CD8-positive, alpha-beta T cell (primary cell): ENCODE measurements at regions of chr5 and their contacts with region 1.

Region 1: DNA sequence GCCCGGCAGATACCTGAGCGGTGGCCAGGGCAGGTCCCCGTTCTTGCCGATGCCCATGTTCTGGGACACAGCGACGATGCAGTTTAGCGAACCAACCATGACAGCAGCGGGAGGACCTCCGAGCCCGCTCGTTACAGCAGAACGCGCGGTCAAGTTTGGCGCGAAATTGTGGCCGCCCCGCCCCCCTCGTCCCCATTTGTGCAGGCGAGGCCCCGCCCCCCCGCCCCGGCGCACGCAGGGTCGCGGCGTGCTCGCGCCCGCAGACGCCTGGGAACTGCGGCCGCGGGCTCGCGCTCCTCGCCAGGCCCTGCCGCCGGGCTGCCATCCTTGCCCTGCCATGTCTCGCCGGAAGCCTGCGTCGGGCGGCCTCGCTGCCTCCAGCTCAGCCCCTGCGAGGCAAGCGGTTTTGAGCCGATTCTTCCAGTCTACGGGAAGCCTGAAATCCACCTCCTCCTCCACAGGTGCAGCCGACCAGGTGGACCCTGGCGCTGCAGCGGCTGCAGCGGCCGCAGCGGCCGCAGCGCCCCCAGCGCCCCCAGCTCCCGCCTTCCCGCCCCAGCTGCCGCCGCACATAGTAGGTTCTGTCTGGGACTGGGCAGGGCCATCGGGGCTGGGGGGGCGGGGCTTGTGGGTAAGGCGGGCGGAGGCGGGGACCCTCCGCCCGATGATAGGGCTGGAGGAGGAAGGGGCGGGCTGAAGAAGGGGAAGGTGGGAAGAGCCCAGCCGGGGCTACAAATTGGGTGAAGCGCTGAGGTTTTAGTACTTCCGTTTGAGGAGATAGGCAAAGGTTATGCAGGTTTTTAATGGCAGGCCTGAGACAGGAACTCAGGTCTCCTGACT is at the starts of genes DHFR and MSH3:
- DNase-seq: peak; percentile 78 to 96 (median 90)
- ATAC-seq: peak; percentile 76
- H3K4me3 ChIP-seq: peak within 1 kb of the TSS; percentile 66 to 83
- H3K4me3 Mint-ChIP-seq: peak within 1 kb of the TSS; percentile 87
- H3K27ac ChIP-seq: peak within 1 kb of the TSS; percentile 71 to 89
- H3K27ac Mint-ChIP-seq: peak within 1 kb of the TSS; percentile 96
- H3K4me1 ChIP-seq: peaks cover 27% of the 10 kb centered on the region
- H3K4me1 Mint-ChIP-seq: peaks cover 27% of the 10 kb centered on the region
- H3K27me3 ChIP-seq: no peaks in the 10 kb centered on the region
- H3K27me3 Mint-ChIP-seq: no peaks in the 10 kb centered on the region
- CTCF ChIP-seq: no peak
- total RNA-seq, gene DHFR: 5.9 TPM
- total RNA-seq, gene MSH3: 8.5 to 8.6 TPM

Region 2: GRCh38 chr5:79235634-79236363 is 1418.8 kb before region 1 on chr5 and contains the start of gene JMY:
- CTCF ChIA-PET with region 1: no interaction called
- POLR2A ChIA-PET with region 1: no interaction called
- intact Hi-C with region 1: loop called in 1 of 2 experiments (anchors 2 kb)
- DNase-seq: peak; percentile 72 to 94 (median 85)
- ATAC-seq: peak; percentile 86
- H3K4me3 ChIP-seq: peak within 1 kb of the TSS; percentile 79 to 81
- H3K4me3 Mint-ChIP-seq: peak within 1 kb of the TSS; percentile 97
- H3K27ac ChIP-seq: peak within 1 kb of the TSS; percentile 91 to 98
- H3K27ac Mint-ChIP-seq: peak within 1 kb of the TSS; percentile 96
- H3K4me1 ChIP-seq: peaks cover 28% of the 10 kb centered on the region
- H3K4me1 Mint-ChIP-seq: peaks cover 34% of the 10 kb centered on the region
- H3K27me3 ChIP-seq: no peaks in the 10 kb centered on the region
- H3K27me3 Mint-ChIP-seq: no peaks in the 10 kb centered on the region
- CTCF ChIP-seq: no peak
- total RNA-seq, gene JMY: 104 TPM

Region 3: DNA sequence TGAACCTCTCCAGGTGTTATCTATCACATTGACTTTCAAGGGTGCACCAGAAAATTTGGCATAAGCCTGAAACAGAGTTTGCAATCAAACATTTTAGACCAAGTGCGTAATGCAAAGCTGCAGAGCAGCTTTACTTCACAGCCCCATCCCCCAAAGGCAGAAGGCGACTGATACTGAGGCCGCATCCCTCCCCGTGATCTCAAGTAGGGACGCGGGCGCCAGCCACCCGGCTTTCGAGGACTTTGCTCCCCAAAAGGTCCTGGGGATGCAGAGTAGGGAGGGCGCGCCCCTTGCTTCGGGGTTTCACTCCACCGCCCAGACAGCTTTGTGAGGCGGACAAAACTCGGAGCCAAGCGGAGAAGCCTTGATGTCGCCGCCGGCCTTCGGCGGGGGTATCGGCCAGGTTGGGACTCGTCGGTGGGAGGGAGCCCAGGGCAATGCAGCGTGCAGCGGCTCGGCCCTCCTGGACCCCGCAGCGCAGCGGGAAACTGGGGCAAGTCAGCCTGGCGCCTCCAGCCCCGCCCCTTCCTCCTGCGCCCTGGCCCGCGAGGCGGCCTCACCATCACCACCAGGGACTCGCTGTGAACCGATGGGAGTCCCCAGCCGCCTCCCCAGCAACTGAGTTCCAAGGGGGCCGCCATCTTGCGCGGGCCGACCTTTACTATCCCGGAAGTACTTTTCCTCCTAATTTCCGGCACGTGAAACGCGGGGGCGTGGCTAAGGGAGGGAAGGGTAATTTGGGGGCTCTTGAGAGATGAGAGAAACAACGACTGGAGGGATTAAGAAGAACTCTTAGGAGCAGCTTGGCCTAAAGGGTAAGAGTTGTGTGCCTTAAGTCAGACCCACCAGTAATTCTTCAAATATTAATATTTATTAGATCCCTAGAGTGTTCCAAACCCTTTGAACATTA is 663.8 kb before region 1 on chr5 and contains the start of gene MTX3:
- CTCF ChIA-PET with region 1: no interaction called
- POLR2A ChIA-PET with region 1: interaction called, 5 read pairs
- intact Hi-C with region 1: loop called (anchors 2 kb)
- DNase-seq: peak; percentile 75 to 93 (median 89)
- ATAC-seq: peak; percentile 95
- H3K4me3 ChIP-seq: peak within 1 kb of the TSS; percentile 60 to 72
- H3K4me3 Mint-ChIP-seq: peak within 1 kb of the TSS; percentile 86
- H3K27ac ChIP-seq: peak within 1 kb of the TSS; percentile 51 to 70
- H3K27ac Mint-ChIP-seq: peak within 1 kb of the TSS; percentile 88
- H3K4me1 ChIP-seq: peaks cover 20% of the 10 kb centered on the region
- H3K4me1 Mint-ChIP-seq: peaks cover 32% of the 10 kb centered on the region
- H3K27me3 ChIP-seq: no peaks in the 10 kb centered on the region
- H3K27me3 Mint-ChIP-seq: peaks cover 11% of the 10 kb centered on the region
- CTCF ChIP-seq: no peak
- total RNA-seq, gene MTX3: 26.2 to 27.1 TPM

Region 4: GRCh38 chr5:80487829-80488721 is 166.5 kb before region 1 on chr5 and contains the start of gene FAM151B:
- CTCF ChIA-PET with region 1: no interaction called
- POLR2A ChIA-PET with region 1: no interaction called
- intact Hi-C with region 1: loop called (anchors 1 to 10 kb)
- DNase-seq: peak; percentile 5 to 80 (median 61)
- ATAC-seq: peak; percentile 83
- H3K4me3 ChIP-seq: peak within 1 kb of the TSS; percentile 46 to 68
- H3K4me3 Mint-ChIP-seq: peak within 1 kb of the TSS; percentile 81
- H3K27ac ChIP-seq: peak within 1 kb of the TSS in 1 of 2 experiments; percentile 10
- H3K27ac Mint-ChIP-seq: peak within 1 kb of the TSS; percentile 52
- H3K4me1 ChIP-seq: peaks cover 9% of the 10 kb centered on the region
- H3K4me1 Mint-ChIP-seq: peaks cover 12% of the 10 kb centered on the region
- H3K27me3 ChIP-seq: peaks cover 0 to 7% of the 10 kb centered on the region in 2 experiments
- H3K27me3 Mint-ChIP-seq: peaks cover 16% of the 10 kb centered on the region
- CTCF ChIP-seq: no peak
- total RNA-seq, gene FAM151B: 0.19 TPM in 1 of 2 experiments, not detected in the other

Region 5: DNA sequence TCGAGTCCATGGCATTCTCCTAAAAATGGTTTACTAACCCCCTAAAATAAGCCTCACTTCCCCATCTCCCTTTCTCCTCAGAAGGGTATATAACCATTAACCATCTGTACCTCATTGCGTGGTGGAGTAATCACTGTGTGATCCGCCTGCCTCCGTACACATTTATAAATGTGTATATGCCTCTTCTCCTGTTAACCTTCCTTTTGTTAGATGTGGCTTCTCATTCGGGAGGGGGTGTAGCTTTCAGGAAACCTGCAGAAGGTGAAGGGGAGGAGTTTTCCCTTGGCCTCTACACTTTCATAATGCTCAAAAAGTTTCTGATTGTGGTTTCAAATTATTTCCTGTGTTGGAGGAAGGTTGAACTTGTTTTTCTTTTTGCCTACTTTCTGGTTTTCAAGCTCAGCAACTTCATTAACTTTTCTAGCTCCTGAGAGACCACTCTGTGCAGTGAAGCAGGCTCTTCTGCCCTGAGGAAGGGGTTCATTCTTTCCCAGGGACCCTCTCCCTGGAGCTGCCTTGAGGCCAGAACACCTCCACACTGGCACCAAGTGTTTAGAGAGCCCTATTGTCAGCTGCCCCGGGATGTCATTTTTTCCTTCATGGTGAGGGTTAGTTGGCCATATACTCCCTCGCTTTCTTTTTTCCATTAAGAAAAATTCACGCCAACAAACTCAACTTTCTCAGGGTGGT is 352.5 kb after region 1 on chr5:
- CTCF ChIA-PET with region 1: no interaction called
- POLR2A ChIA-PET with region 1: no interaction called
- intact Hi-C with region 1: loop called in 1 of 2 experiments (anchors 5 kb)
- DNase-seq: peak in 7 of 9 experiments; percentile 39 to 89 (median 61)
- ATAC-seq: peak; percentile 87
- H3K4me3 ChIP-seq: peak overlapping the region; percentile 41 to 46
- H3K4me3 Mint-ChIP-seq: peak overlapping the region; percentile 83
- H3K27ac ChIP-seq: peak overlapping the region; percentile 46 to 75
- H3K27ac Mint-ChIP-seq: peak overlapping the region; percentile 94
- H3K4me1 ChIP-seq: peaks cover 74% of the 10 kb centered on the region
- H3K4me1 Mint-ChIP-seq: peaks cover 86% of the 10 kb centered on the region
- H3K27me3 ChIP-seq: no peaks in the 10 kb centered on the region
- H3K27me3 Mint-ChIP-seq: no peaks in the 10 kb centered on the region
- CTCF ChIP-seq: no peak

Region 6: GRCh38 chr5:81851481-81852178 is 1197.0 kb after region 1 on chr5:
- CTCF ChIA-PET with region 1: no interaction called
- POLR2A ChIA-PET with region 1: no interaction called
- intact Hi-C with region 1: loop called in 1 of 2 experiments (anchors 5 kb)
- DNase-seq: peak; percentile 81 to 95 (median 90)
- ATAC-seq: peak; percentile 91
- H3K4me3 ChIP-seq: peak overlapping the region; percentile 63 to 68
- H3K4me3 Mint-ChIP-seq: peak overlapping the region; percentile 94
- H3K27ac ChIP-seq: peak overlapping the region; percentile 56 to 58
- H3K27ac Mint-ChIP-seq: peak overlapping the region; percentile 97
- H3K4me1 ChIP-seq: peaks cover 26% of the 10 kb centered on the region
- H3K4me1 Mint-ChIP-seq: peaks cover 51% of the 10 kb centered on the region
- H3K27me3 ChIP-seq: no peaks in the 10 kb centered on the region
- H3K27me3 Mint-ChIP-seq: no peaks in the 10 kb centered on the region
- CTCF ChIP-seq: no peak